ENCODE measurements at regions of chrX and their contacts with region 1.

Region 1: DNA sequence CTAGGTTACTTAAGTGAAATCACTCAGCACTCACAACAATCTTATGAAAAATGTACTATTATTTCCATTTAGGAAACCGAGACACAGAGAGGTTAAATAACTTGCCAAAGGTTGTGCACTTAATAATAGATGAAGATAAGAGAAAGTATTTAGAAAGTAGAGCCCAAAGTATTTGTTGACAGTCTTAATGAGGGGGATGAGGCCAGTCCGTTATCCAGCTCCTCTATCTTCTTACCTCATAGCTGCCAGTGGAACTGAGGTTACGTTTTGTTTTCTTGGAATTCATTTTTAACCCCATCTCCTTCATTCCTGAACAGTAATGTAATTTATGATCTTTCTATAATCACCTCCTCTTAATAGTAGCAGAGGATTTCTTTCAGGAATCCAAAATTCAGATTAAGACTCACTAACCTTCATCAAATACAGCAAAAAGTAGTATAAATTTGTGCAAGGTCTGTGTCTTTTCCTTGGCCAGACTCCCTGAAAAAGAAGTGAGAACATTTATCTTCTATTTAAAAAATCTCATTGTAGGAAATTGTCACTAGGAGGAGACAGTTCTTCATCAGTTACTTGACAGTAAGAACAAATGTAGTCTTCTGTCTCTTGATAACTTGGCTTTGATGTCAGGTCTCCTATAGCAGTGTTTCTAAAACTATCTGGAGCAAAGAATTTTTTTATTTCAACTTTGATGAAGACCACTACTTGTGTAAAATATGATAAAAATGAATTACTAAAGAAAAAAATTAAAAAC is 35.5 kb downstream of the F8 start:
- DNase-seq: peak in 2 of 5 donors; percentile 3 to 5
- H3K4me3 ChIP-seq: no peak overlapping the region
- H3K4me3 Mint-ChIP-seq: no peak overlapping the region
- H3K27ac ChIP-seq: no peak overlapping the region
- H3K27ac Mint-ChIP-seq: no peak overlapping the region
- H3K4me1 ChIP-seq: no peaks in the 10 kb centered on the region
- H3K4me1 Mint-ChIP-seq: peaks cover 0 to 6% (median 0%) of the 10 kb centered on the region in 4 donors
- H3K27me3 ChIP-seq: no peaks in the 10 kb centered on the region
- H3K27me3 Mint-ChIP-seq: peaks cover 0 to 2% of the 10 kb centered on the region in 2 donors

Region 2: GRCh38 chrX:154607370-154607769 is 379.6 kb before region 1 on chrX:
- CTCF ChIA-PET with region 1: no interaction called
- POLR2A ChIA-PET with region 1: no interaction called
- intact Hi-C with region 1: no loop called
- DNase-seq: no peak
- H3K4me3 ChIP-seq: no peak overlapping the region
- H3K4me3 Mint-ChIP-seq: no peak overlapping the region
- H3K27ac ChIP-seq: no peak overlapping the region
- H3K27ac Mint-ChIP-seq: no peak overlapping the region
- H3K4me1 ChIP-seq: no peaks in the 10 kb centered on the region
- H3K4me1 Mint-ChIP-seq: peaks cover 0 to 5% (median 2%) of the 10 kb centered on the region in 4 donors
- H3K27me3 ChIP-seq: no peaks in the 10 kb centered on the region
- H3K27me3 Mint-ChIP-seq: peaks cover 0 to 1% of the 10 kb centered on the region in 2 donors

Region 3: DNA sequence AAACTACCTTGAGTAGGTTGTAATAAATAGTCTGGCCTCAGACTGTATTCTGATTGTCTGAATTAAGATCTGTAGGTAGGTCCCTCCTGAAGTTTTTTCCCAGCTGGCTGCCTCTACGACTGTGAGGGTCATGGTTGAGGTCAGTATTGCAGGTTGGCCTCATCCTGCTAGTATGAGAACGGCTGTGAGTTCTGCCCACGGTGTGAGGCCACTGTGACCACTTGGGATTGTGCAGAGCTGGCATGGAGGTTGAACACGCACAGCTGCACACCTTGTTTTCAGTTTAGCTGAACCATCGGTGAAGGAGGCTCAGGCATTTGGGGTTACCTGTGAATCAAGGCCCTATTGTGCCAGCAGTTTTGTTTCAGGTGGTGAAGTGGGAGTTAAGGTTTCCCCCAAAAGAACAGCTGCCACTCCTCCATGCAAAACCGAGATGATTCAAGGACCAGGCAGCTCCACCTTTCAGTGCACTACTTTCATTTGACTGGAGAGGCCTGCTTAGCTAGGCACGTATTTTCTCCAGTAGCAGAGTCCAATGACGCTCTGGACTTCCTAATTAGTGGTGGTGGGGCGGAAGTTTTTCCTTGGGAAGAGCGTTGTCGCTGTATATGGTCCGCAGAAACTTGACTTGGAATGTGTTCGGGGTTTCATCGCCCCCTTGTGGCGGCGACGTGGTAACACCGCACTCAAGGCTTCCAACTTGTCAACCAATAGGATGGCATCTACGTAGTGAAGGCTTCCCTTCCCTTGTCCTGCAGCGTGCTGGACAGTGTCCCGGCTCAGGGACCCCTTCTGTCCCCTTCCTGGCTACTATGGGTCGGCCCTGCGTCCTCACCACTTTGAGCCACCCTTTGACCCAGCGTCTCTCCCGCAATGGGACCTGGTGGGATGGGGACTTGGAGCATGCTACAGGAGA is 70.1 kb after region 1 on chrX:
- CTCF ChIA-PET with region 1: interaction called, 33 read pairs
- POLR2A ChIA-PET with region 1: no interaction called
- intact Hi-C with region 1: no loop called
- DNase-seq: peak; percentile 44 to 52 (median 47)
- H3K4me3 ChIP-seq: peak overlapping the region in 1 of 2 donors; percentile 19
- H3K4me3 Mint-ChIP-seq: peak overlapping the region; percentile 71 to 85 (median 78)
- H3K27ac ChIP-seq: peak overlapping the region; percentile 2
- H3K27ac Mint-ChIP-seq: peak overlapping the region; percentile 65 to 86 (median 81)
- H3K4me1 ChIP-seq: peaks cover 13% of the 10 kb centered on the region
- H3K4me1 Mint-ChIP-seq: peaks cover 7 to 26% (median 15%) of the 10 kb centered on the region in 4 donors
- H3K27me3 ChIP-seq: no peaks in the 10 kb centered on the region
- H3K27me3 Mint-ChIP-seq: no peaks in the 10 kb centered on the region

Measured in CD4-positive, alpha-beta memory T cell (primary cell).